Common myeloid progenitor, CD34-positive (primary cell): ENCODE measurements at regions of chr13 and their contacts with region 1.

Region 1: GRCh38 chr13:108609353-108609752 is 20.1 kb upstream of the MYO16 start:
- DNase-seq: peak; percentile 6 to 61 (median 32)
- H3K4me3 ChIP-seq: no peak overlapping the region
- H3K27ac ChIP-seq: no peak overlapping the region
- H3K4me1 ChIP-seq: no peaks in the 10 kb centered on the region
- H3K27me3 ChIP-seq: no peaks in the 10 kb centered on the region

Region 2: GRCh38 chr13:108495646-108496361 is 113.5 kb before region 1 on chr13:
- CTCF ChIA-PET with region 1: no interaction called
- POLR2A ChIA-PET with region 1: no interaction called
- DNase-seq: peak in 2 of 3 donors; percentile 22 to 47
- H3K4me3 ChIP-seq: peak overlapping the region; percentile 17 to 81 (median 67)
- H3K27ac ChIP-seq: no peak overlapping the region
- H3K4me1 ChIP-seq: peaks cover 0 to 21% (median 19%) of the 10 kb centered on the region in 4 experiments
- H3K27me3 ChIP-seq: peaks cover 5 to 50% (median 26%) of the 10 kb centered on the region in 5 experiments

Region 3: DNA sequence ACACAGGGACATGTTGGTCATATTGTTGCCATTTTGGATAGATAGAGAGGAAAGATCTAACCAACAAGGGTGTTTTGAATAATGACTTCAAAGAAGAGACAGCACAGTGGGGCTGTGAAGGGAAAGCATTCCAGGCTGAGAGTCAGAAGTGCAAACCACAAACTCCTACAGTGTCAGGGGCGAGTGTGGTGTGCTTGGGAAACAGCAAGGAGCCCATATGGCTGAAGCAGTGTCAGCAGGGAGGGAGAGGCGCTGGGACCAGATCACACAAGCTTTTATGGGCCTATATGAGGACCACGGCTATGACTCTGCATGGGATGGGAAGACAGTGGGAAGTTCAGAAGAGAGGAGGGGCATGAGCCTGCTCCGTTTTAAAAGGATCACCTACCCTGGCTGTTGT is 186.5 kb after region 1 on chr13:
- CTCF ChIA-PET with region 1: no interaction called
- POLR2A ChIA-PET with region 1: no interaction called
- DNase-seq: no peak
- H3K4me3 ChIP-seq: no peak overlapping the region
- H3K27ac ChIP-seq: no peak overlapping the region
- H3K4me1 ChIP-seq: no peaks in the 10 kb centered on the region
- H3K27me3 ChIP-seq: no peaks in the 10 kb centered on the region

Region 4: GRCh38 chr13:108895220-108895704 is 285.9 kb after region 1 on chr13:
- CTCF ChIA-PET with region 1: interaction called, 16 read pairs
- POLR2A ChIA-PET with region 1: no interaction called
- DNase-seq: peak; percentile 38 to 67 (median 65)
- H3K4me3 ChIP-seq: no peak overlapping the region
- H3K27ac ChIP-seq: no peak overlapping the region
- H3K4me1 ChIP-seq: peaks cover 0 to 16% (median 6%) of the 10 kb centered on the region in 4 experiments
- H3K27me3 ChIP-seq: no peaks in the 10 kb centered on the region